HCT116 (cell line): ENCODE measurements at regions of chr4 and their contacts with region 1.

Region 1: DNA sequence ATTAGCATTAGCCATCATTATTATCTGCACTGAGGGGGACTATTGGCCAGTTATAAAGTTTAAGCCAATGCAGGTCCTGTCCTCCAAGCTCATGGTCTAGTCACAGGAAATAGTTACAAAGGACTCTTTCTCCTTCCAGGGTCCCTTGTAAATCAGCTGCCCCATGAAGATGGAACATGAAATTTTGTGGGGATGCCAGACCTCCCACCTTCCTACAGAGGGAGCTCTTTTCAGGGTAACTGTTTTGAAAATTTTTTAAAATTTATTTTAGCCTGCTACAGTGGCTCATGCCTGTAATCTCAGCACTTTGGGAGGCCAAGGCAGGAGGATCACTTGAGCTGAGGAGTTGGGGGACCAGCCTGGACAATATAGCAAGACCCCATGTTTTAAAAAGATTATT is 124.4 kb upstream of the SLC34A2 start:
- DNase-seq: no peak
- ATAC-seq: peak; percentile 75
- H3K4me3 ChIP-seq: no peak overlapping the region
- H3K27ac ChIP-seq: no peak overlapping the region
- H3K4me1 ChIP-seq: peaks cover 0 to 4% of the 10 kb centered on the region in 2 experiments; a peak in 1 of 4 replicates
- H3K27me3 ChIP-seq: no peaks in the 10 kb centered on the region
- CTCF ChIP-seq: peak; percentile 27 to 71 (median 66); a peak in 5 of 6 replicates
- POLR2A ChIP-seq: no peak
- RAD21 ChIP-seq: peak; percentile 57

Region 2: DNA sequence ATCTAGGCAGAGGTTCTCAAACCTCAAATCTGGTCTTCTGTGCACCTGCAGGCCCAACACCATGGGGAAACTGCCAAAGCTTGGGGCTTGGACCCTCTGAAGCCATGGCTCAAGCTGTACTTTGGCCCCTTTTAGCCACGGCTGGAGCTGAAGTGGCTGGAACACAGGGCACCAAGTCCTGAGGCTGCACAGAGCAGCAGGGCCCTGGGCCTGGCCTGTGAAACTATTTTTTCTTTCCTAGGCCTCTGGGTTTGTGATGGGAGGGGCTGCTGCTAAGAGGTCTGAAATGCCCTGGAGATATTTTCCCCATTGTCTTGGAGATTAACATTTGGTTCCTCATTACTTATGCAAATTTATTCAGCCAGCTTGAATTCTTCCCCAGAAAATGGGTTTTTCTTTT is 315.8 kb before region 1 on chr4:
- CTCF ChIA-PET with region 1: no interaction called
- POLR2A ChIA-PET with region 1: no interaction called
- RAD21 ChIA-PET with region 1: no interaction called
- intact Hi-C with region 1: no loop called
- DNase-seq: no peak
- ATAC-seq: no peak
- H3K4me3 ChIP-seq: no peak overlapping the region
- H3K27ac ChIP-seq: no peak overlapping the region
- H3K4me1 ChIP-seq: peaks cover 0 to 4% of the 10 kb centered on the region in 2 experiments; a peak in 1 of 4 replicates
- H3K27me3 ChIP-seq: no peaks in the 10 kb centered on the region
- CTCF ChIP-seq: no peak
- POLR2A ChIP-seq: no peak
- RAD21 ChIP-seq: no peak

Region 3: GRCh38 chr4:25509646-25510045 is 21.6 kb before region 1 on chr4:
- CTCF ChIA-PET with region 1: interaction called, 14 read pairs
- POLR2A ChIA-PET with region 1: no interaction called
- RAD21 ChIA-PET with region 1: no interaction called
- intact Hi-C with region 1: no loop called
- DNase-seq: no peak
- ATAC-seq: no peak
- H3K4me3 ChIP-seq: no peak overlapping the region
- H3K27ac ChIP-seq: no peak overlapping the region
- H3K4me1 ChIP-seq: no peaks in the 10 kb centered on the region
- H3K27me3 ChIP-seq: no peaks in the 10 kb centered on the region
- CTCF ChIP-seq: no peak
- POLR2A ChIP-seq: no peak
- RAD21 ChIP-seq: no peak

Region 4: GRCh38 chr4:25767877-25768725 is 236.8 kb after region 1 on chr4:
- CTCF ChIA-PET with region 1: interaction called, 10 read pairs
- POLR2A ChIA-PET with region 1: no interaction called
- RAD21 ChIA-PET with region 1: no interaction called
- intact Hi-C with region 1: loop called (anchors 1 kb)
- DNase-seq: peak; percentile 37
- ATAC-seq: peak; percentile 87
- H3K4me3 ChIP-seq: no peak overlapping the region
- H3K27ac ChIP-seq: no peak overlapping the region
- H3K4me1 ChIP-seq: no peaks in the 10 kb centered on the region
- H3K27me3 ChIP-seq: no peaks in the 10 kb centered on the region
- CTCF ChIP-seq: peak; percentile 76 to 88 (median 80); a peak in 5 of 6 replicates
- POLR2A ChIP-seq: no peak
- RAD21 ChIP-seq: peak; percentile 77

Region 5: DNA sequence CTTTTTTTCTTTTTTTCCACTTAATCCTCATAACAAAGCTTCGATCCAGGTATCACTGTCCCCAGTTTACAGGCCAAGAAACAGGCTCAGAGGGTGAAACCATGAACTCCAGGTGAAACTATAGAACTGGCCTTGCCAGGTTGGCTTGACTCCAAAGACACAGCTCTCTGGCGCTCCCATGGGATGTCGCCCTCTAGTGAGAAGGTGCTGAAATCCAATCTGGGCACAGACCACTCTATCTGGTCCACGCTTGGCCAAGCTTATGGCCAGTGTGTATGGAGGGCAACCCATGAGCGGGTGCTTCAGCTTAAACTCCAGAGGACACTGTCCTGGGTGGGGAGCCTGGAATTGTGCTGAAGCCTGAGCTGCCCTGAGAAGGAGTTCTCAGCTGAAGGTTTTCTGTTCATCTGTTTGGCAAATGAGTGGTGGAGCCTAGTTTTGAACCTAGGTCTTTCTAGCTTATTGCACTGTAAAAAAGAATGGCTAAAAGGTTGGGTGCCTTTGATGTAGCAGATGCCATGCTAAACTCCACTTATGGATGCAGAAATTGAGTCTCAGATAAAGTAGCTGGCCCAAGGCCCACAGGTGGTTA is 261.0 kb after region 1 on chr4:
- CTCF ChIA-PET with region 1: interaction called, 11 read pairs
- POLR2A ChIA-PET with region 1: no interaction called
- RAD21 ChIA-PET with region 1: no interaction called
- intact Hi-C with region 1: no loop called
- DNase-seq: peak; percentile 51
- ATAC-seq: peak; percentile 92
- H3K4me3 ChIP-seq: no peak overlapping the region
- H3K27ac ChIP-seq: no peak overlapping the region
- H3K4me1 ChIP-seq: peaks cover 4 to 15% of the 10 kb centered on the region in 2 experiments
- H3K27me3 ChIP-seq: no peaks in the 10 kb centered on the region
- CTCF ChIP-seq: peak; percentile 67 to 88 (median 86); a peak in 5 of 6 replicates
- POLR2A ChIP-seq: no peak
- RAD21 ChIP-seq: peak; percentile 70